Activated CD4-positive, alpha-beta memory T cell treated with anti-CD3 and anti-CD28 coated beads, Interleukin-2, amount 10 ng/mL, durations not matched to agents 7 days and 5 days (primary cell): ENCODE measurements at regions of chr6 and their contacts with region 1.

Region 1: DNA sequence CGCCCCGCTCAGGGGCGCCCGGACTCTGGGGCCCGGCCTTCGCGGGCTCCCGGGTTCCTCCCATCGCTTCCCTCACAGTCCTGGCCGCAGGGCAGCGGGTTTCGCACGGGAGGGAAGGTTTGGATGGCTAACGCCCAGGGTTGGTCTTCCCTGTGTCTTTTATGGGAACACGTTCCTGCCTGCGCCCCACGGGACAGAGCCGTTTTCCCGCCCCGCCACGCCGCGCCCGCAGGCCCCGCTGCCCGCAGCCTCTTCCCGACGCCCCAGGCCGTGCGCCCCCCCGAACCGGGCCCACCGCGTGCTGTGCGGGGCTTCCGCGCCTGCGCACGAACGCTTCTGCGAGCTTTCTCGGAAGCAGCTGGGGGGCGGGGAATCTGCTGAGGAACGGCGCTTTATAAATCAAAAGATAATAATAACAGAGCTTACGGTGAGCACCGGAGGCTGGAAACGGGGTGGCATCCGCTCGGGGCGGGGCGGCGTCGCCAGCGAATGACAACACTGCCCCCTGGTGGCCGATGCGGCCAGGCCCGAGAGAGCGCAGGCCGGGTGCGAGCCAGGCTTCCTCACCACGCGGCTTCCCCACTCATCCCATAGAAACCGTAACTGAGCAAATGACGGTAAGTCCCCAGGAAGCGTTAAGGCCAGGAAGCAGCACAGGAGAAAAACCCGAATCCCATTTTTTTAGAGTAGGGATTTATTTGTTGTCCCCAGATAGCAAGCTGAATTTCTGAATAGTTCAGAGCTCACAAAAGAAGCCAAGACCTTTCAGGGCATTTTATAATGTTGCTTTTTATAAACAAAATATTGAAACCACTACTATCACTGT is 116.4 kb downstream of the MYLK4 start:
- DNase-seq: peak; percentile 84
- H3K4me3 Mint-ChIP-seq: peak overlapping the region; percentile 66
- H3K27ac Mint-ChIP-seq: no peak overlapping the region
- H3K4me1 Mint-ChIP-seq: peaks cover 8% of the 10 kb centered on the region
- H3K27me3 Mint-ChIP-seq: peaks cover 36% of the 10 kb centered on the region

Region 2: GRCh38 chr6:2209226-2209809 is 425.0 kb before region 1 on chr6:
- CTCF ChIA-PET with region 1: interaction called, 26 read pairs
- POLR2A ChIA-PET with region 1: no interaction called
- DNase-seq: peak; percentile 50
- H3K4me3 Mint-ChIP-seq: no peak overlapping the region
- H3K27ac Mint-ChIP-seq: no peak overlapping the region
- H3K4me1 Mint-ChIP-seq: no peaks in the 10 kb centered on the region
- H3K27me3 Mint-ChIP-seq: no peaks in the 10 kb centered on the region

Region 3: DNA sequence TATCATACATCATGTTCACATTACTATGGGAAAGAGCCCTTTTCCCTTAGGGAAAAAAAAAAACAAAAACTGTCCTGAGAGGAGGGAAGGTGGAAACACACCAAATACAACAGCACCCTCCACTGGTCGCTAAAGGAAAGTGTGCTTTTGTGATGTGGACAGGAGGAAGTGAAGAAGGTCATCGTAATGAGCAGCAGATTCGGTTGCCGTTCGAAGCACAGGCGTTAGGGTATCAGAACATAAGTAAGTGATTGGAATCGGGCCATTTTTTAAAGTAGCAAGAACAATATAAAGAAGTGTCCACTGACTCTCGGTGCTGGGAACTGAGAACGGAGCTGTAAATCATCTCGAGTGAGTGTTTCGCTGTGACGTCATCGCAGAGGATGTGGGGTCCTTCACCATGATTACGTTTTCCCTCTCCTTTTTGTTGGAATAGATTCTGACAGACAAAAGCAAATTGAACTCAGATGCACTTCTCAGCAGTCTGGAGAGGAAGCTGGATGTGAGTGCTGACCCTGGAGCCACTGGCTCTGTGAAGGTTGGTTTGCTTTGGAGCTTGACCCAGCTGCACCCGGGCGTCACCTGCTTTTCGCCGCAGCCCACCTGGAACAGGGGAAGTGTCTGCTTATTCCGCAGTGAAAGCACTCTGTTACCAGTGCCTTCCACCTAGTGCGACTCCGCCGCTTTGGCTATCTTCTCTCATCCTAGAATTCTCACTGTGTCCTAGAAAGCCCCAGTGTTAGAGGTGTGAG is 185.4 kb before region 1 on chr6:
- CTCF ChIA-PET with region 1: interaction called, 28 read pairs
- POLR2A ChIA-PET with region 1: no interaction called
- DNase-seq: peak; percentile 31
- H3K4me3 Mint-ChIP-seq: peak overlapping the region; percentile 33
- H3K27ac Mint-ChIP-seq: no peak overlapping the region
- H3K4me1 Mint-ChIP-seq: peaks cover 4% of the 10 kb centered on the region
- H3K27me3 Mint-ChIP-seq: peaks cover 18% of the 10 kb centered on the region

Region 4: GRCh38 chr6:2542858-2543218 is 91.5 kb before region 1 on chr6:
- CTCF ChIA-PET with region 1: interaction called, 14 read pairs
- POLR2A ChIA-PET with region 1: interaction called, 4 read pairs
- DNase-seq: peak; percentile 80
- H3K4me3 Mint-ChIP-seq: peak overlapping the region; percentile 28
- H3K27ac Mint-ChIP-seq: peak overlapping the region; percentile 74
- H3K4me1 Mint-ChIP-seq: peaks cover 32% of the 10 kb centered on the region
- H3K27me3 Mint-ChIP-seq: peaks cover 75% of the 10 kb centered on the region

Region 5: GRCh38 chr6:2667617-2668016 is 33.3 kb after region 1 on chr6:
- CTCF ChIA-PET with region 1: no interaction called
- POLR2A ChIA-PET with region 1: no interaction called
- DNase-seq: no peak
- H3K4me3 Mint-ChIP-seq: no peak overlapping the region
- H3K27ac Mint-ChIP-seq: no peak overlapping the region
- H3K4me1 Mint-ChIP-seq: no peaks in the 10 kb centered on the region
- H3K27me3 Mint-ChIP-seq: peaks cover 13% of the 10 kb centered on the region